Aorta (tissue), 5 donors: ENCODE measurements at regions of chr1 and their contacts with region 1.

Region 1: DNA sequence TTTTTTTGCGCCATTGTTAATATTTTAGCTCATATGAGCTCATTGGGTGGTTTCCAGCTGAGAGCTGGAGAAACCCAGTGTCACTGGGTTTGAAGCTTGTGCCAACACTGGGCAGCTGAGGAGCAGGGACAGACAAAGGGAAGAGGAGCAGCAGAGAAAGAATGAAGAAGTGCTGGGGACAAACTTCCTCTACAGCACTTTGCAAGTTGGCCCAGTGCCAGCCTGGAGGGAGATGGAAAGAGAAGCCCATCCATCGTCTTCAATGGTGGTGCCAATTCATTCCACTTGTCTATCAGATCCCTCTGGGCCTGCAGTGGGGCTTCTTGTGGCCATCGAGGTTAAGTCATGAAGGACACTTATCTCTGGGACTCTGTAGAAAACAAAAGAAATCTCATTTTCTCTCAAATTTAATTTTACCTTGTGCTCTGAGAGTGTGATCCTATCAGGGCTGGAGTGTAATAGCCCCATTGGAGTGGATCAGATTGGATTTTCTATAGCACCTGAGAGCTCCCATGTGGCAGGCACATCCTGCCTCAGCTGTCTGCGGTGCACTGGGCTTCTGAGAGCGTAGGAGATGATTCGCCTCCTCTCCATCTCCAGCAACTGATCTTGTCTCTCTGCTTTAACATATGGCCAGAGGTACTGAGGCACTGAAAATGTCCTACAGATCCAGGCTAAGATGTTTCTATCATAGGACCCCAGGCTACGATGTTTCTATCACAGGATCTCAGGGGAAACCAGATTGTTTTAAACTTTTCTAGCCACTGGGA is 114.7 kb downstream of the TNR start:
- DNase-seq: peak; percentile 78 to 80
- ATAC-seq: no peak
- H3K4me3 ChIP-seq: no peak overlapping the region
- H3K27ac ChIP-seq: peak overlapping the region in 1 of 2 donors; percentile 42
- H3K4me1 ChIP-seq: peaks cover 4 to 6% of the 10 kb centered on the region in 2 donors
- H3K27me3 ChIP-seq: no peaks in the 10 kb centered on the region

Region 2: DNA sequence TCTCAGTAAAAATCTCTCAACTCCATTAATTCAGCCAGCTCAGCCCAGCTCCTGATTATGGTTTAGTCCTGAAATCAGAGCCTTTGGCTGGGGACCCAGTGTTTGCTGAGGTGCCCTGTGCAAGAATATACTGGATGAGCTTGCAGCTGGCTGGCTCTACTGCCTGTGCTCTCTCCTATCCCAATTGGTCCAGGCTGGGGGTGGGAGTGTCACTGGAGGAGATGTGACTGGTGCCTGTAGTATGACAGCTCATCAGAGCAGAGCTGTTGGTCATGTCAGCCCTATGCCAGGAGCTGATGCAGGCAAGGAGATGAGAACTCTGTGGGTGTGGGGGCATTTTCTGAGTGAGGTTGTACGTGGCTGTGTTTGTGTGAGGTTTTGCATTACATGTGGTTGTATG is 27.7 kb after region 1 on chr1:
- intact Hi-C with region 1: loop called in 1 of 2 experiments (anchors 1 kb)
- DNase-seq: no peak
- ATAC-seq: no peak
- H3K4me3 ChIP-seq: no peak overlapping the region
- H3K27ac ChIP-seq: no peak overlapping the region
- H3K4me1 ChIP-seq: no peaks in the 10 kb centered on the region
- H3K27me3 ChIP-seq: no peaks in the 10 kb centered on the region